ENCODE measurements at regions of chr7 and their contacts with region 1.

Region 1: DNA sequence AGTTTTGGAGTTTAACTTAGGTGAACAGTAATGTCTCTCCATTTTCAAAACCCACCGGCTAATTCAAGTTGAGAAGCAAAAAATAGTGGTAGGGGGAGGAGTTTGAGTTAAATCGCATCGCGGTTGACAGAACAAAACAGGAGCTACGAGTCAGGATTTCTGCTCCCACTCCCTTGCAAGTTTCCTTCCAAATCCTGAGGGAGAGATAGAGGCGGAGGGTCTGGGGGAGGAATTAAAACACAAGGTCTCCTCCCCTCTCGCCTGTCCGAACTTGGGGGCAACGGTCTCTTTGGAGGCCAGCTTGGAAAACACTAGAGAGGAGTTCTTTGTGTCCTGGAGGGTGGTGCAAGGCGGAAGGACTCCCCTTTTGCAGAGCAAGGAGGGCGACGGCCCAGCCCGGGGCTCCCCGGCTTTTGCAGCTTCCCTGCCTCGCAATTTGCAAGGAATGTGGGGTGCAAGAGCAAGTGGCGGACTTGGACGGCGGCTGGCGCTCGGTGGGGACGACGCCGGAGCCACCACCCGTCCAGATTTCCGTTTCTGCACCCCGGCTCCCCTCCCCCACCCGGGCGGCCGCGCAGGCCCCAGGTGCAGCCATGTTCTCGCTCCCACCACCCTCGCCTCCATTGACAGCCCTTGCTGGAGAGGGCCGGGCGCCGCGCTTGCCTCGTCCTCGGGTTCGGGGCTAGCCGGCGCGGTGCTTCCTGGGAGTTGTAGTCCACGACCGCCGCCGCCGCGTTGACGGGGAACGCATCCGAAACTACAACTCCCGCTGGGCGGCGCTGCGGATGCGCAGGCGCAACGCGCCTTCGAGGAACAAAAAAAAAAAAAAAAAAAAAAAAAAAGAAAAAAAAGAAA is 454 bp upstream of the GTF2I start:
- DNase-seq: peak; percentile 86
- ATAC-seq: peak; percentile 78
- H3K4me3 ChIP-seq: peak overlapping the region; percentile 64
- H3K27ac ChIP-seq: peak overlapping the region; percentile 99
- H3K4me1 ChIP-seq: peaks cover 4% of the 10 kb centered on the region; the same call in 1 of the 2 replicates
- H3K27me3 ChIP-seq: no peaks in the 10 kb centered on the region
- CTCF ChIP-seq: 0 out of 6 replicates have a peak, but pooled peaks of 1 of the 3 experiments have one; percentile 7
- EP300 ChIP-seq: no peak
- POLR2A ChIP-seq: peak; percentile 94
- RAD21 ChIP-seq: no peak

Region 2: DNA sequence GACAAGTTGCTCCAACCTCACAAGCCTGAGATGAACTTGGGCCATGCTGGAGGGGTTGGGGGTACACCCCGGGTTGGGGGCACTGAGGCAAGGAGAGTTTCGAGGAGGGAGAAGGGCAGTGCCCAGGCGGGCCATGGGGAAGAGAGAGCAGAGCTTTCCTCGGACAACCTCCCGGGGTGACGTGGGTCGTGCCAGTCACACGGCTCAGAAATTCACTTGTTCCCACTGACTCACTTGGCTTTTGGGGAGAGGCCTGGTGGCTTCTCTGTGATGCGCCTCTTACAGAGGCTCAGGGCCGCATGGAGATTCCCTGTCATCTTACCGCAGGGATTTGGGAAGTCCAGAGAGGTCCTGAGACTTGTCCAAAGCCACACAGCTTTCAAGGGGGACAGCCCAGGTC is 444.4 kb before region 1 on chr7:
- CTCF ChIA-PET with region 1: no interaction called
- POLR2A ChIA-PET with region 1: no interaction called
- RAD21 ChIA-PET with region 1: no interaction called
- SMC1A ChIA-PET with region 1: no interaction called
- in situ Hi-C with region 1: no loop called
- intact Hi-C with region 1: loop called (anchors 5 kb)
- DNase-seq: no peak
- ATAC-seq: no peak
- H3K4me3 ChIP-seq: peak overlapping the region; percentile 96
- H3K27ac ChIP-seq: peak overlapping the region; percentile 94
- H3K4me1 ChIP-seq: peaks cover 38% of the 10 kb centered on the region
- H3K27me3 ChIP-seq: no peaks in the 10 kb centered on the region
- CTCF ChIP-seq: no peak
- EP300 ChIP-seq: no peak
- POLR2A ChIP-seq: peak; percentile 49; the same call in 1 of the 2 replicates
- RAD21 ChIP-seq: no peak

Region 3: DNA sequence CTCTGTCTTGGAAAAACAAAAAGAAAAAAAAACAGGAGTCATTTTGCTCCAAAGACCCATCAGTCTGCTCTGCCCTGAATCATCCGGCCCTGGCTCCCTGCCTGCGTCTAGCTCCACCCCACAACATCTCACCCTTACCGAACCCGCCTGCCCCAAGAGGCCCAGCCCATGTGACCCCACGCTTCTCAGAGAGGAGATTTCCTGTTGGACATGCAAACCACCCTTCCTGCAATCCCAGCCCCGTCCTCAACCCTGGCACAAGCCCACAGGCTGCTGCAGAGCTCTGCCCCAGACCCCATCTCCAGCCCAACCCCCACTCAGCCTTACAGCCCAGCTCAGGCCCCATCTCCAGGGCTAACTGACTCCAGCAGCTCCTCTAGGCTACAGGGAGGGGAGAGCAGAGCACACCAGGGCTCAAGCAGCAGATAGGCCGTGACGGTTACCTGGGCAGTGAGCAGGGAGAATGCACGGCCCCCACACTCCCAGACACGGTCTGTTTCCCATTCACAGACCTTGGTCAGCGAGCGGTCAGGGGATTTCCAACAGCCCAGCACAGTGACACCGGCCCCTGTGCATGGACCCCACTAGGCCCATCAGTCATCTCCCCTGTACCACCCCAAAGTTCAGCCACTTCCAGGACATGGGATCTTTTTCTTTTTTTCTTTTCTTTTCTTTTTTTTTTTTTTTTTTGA is 69.5 kb before region 1 on chr7:
- CTCF ChIA-PET with region 1: interaction called, 4 read pairs
- POLR2A ChIA-PET with region 1: interaction called, 7 read pairs
- RAD21 ChIA-PET with region 1: interaction called, 10 read pairs
- SMC1A ChIA-PET with region 1: interaction called, 6 read pairs
- in situ Hi-C with region 1: no loop called
- intact Hi-C with region 1: loop called (anchors 2 kb)
- DNase-seq: peak; percentile 70
- ATAC-seq: peak; percentile 97
- H3K4me3 ChIP-seq: no peak overlapping the region
- H3K27ac ChIP-seq: peak overlapping the region; percentile 82
- H3K4me1 ChIP-seq: peaks cover 24% of the 10 kb centered on the region
- H3K27me3 ChIP-seq: no peaks in the 10 kb centered on the region
- CTCF ChIP-seq: no peak
- EP300 ChIP-seq: peak in 1 of 2 experiments; percentile 44; a peak in 1 of 4 replicates
- POLR2A ChIP-seq: peak; percentile 72
- RAD21 ChIP-seq: no peak

Region 4: DNA sequence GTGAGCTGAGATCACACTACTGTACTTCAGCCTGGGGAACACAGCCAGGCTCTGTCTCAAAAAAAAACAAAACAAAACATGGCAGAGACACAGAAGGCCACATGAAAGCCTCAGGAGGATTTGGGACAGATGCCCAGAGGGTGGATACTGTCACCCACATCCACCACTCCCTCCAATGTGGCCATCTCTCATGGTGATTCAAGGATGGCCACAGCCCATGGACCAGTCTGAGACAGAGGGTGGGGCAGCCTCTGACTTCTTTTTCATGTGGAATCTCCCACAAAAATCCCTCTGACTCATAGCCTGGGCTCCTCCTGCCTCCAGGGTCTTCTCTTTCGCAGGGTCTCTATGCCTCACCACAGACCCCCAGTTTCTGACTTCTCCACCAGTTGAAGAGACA is 58.5 kb before region 1 on chr7:
- CTCF ChIA-PET with region 1: no interaction called
- POLR2A ChIA-PET with region 1: no interaction called
- RAD21 ChIA-PET with region 1: interaction called, 3 read pairs
- SMC1A ChIA-PET with region 1: interaction called, 3 read pairs
- in situ Hi-C with region 1: no loop called
- intact Hi-C with region 1: loop called (anchors 2 kb)
- DNase-seq: no peak
- ATAC-seq: peak; percentile 59
- H3K4me3 ChIP-seq: no peak overlapping the region
- H3K27ac ChIP-seq: no peak overlapping the region
- H3K4me1 ChIP-seq: peaks cover 16% of the 10 kb centered on the region
- H3K27me3 ChIP-seq: no peaks in the 10 kb centered on the region
- CTCF ChIP-seq: no peak
- EP300 ChIP-seq: no peak
- POLR2A ChIP-seq: no peak
- RAD21 ChIP-seq: no peak

Region 5: GRCh38 chr7:74671602-74672001 is 14.5 kb after region 1 on chr7:
- CTCF ChIA-PET with region 1: interaction called, 5 read pairs
- POLR2A ChIA-PET with region 1: interaction called, 12 read pairs
- RAD21 ChIA-PET with region 1: interaction called, 4 read pairs
- SMC1A ChIA-PET with region 1: interaction called, 6 read pairs
- in situ Hi-C with region 1: no loop called
- intact Hi-C with region 1: no loop called
- DNase-seq: no peak
- ATAC-seq: no peak
- H3K4me3 ChIP-seq: no peak overlapping the region
- H3K27ac ChIP-seq: no peak overlapping the region
- H3K4me1 ChIP-seq: peaks cover 3% of the 10 kb centered on the region; the same call in 1 of the 2 replicates
- H3K27me3 ChIP-seq: no peaks in the 10 kb centered on the region
- CTCF ChIP-seq: no peak
- EP300 ChIP-seq: no peak
- POLR2A ChIP-seq: no peak
- RAD21 ChIP-seq: no peak

Measured in GM12878 (cell line).